HEK293T (cell line): ENCODE measurements at regions of chr19 and their contacts with region 1.

Region 1: GRCh38 chr19:55391702-55392615 is 6.2 kb downstream of the RPL28 start:
- DNase-seq: no peak

Region 2: DNA sequence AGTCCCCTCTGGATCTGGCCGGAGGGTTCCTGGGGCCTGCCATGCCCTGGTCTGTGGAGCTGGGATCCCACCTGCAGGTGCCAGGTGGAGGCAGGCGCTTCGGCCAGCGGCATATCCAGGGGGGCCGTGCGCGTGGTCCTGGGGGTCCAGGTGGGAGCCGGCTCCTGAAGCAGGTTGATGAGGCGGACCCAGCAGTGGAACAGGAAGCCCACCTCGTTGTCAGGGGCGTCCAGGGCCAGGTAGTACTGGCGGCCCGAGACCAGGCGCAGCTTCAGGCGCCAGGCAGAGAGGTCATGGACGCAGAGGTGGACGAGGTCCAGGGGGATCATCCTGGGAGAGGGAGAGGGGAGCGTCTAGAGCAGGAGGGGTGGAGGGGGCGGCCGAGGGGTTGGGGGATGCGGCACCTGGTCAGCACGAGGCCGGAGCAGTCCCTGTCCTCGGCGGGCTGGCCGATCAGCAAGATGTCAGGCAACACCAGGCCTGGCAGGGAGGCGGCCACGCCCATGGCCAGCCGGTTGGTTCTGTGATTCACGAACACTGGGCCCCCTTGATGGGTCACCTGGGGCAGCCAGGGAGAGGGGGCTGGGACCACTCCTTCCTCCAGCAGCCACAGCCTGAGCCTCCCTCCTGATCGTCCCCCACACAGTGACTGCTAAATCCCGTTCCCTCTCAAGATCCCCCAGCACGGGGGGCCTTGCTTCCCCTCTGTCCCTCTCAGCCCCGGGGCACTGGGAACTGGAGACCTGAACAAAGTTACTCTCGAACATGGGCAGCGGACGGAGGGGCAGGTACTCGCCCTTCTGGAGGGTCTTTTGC is 29.6 kb before region 1 on chr19:
- CTCF ChIA-PET with region 1: no interaction called
- POLR2A ChIA-PET with region 1: no interaction called
- DNase-seq: no peak

Region 3: GRCh38 chr19:55407800-55408532 is 16.0 kb after region 1 on chr19:
- CTCF ChIA-PET with region 1: no interaction called
- POLR2A ChIA-PET with region 1: interaction called, 72 read pairs
- DNase-seq: peak; percentile 97